ENCODE measurements at regions of chr3 and their contacts with region 1.

Region 1: GRCh38 chr3:101685870-101686412 is 577 bp downstream of the RPL24 start:
- DNase-seq: no peak
- ATAC-seq: peak; percentile 9 to 10
- H3K4me3 ChIP-seq: peak overlapping the region; percentile 74 to 93 (median 85)
- H3K27ac ChIP-seq: peak overlapping the region; percentile 93 to 97 (median 96)
- H3K4me1 ChIP-seq: peaks cover 26 to 36% of the 10 kb centered on the region in 2 donors
- H3K27me3 ChIP-seq: no peaks in the 10 kb centered on the region
- CTCF ChIP-seq: no peak
- POLR2A ChIP-seq: no peak

Region 2: GRCh38 chr3:100708967-100709841 is 976.7 kb before region 1 on chr3 and contains the start of gene TFG:
- in situ Hi-C with region 1: no loop called
- intact Hi-C with region 1: loop called (anchors 5 kb)
- DNase-seq: peak; percentile 95 to 98
- ATAC-seq: peak; percentile 95 to 98
- H3K4me3 ChIP-seq: peak within 1 kb of the TSS; percentile 73 to 97 (median 86)
- H3K27ac ChIP-seq: peak within 1 kb of the TSS; percentile 92 to 99 (median 96)
- H3K4me1 ChIP-seq: peaks cover 18 to 24% of the 10 kb centered on the region in 2 donors
- H3K27me3 ChIP-seq: no peaks in the 10 kb centered on the region
- CTCF ChIP-seq: no peak
- POLR2A ChIP-seq: peak; percentile 81 to 84
- total RNA-seq, gene TFG: 57.2 to 77.9 (median 67.3) TPM

Region 3: DNA sequence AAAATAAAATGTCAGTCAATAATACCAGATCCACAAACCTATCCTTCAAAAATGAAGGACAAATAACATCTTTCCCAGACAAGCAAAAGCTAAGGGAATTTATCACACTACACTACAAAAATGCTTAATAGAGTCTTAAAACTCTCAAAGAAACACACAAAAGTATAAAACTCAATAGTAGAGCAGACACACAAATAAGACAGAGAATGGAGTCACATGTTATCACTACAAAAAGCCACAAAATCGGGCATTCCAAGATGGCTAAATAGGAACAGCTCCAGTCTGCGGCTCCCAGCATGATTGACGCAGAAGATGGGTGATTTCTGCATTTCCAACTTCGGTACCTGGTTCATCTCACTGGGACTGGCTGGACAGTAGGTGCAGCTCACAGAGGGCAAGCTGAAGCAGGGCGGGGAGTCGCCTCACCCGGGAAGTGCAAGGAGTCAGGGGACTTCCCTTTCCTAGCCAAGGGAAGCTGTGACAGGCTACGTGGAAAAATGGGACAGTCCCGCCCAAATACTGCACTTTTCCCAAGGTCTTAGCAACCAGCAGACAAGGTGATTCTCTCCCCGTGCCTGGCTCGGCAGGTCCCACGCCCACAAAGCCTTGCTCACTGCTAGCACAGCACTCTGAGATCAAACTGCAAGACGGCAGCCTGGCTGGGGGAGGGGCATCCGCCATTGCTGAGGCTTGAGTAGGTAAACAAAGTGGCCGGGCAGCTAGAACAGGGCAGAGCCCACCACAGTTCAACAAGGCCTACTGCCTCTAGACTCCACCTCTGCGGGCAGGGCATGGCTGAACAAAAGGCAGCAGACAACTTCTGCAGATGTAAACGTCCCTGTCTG is 219.3 kb before region 1 on chr3:
- in situ Hi-C with region 1: no loop called
- intact Hi-C with region 1: no loop called
- DNase-seq: no peak
- ATAC-seq: no peak
- H3K4me3 ChIP-seq: no peak overlapping the region
- H3K27ac ChIP-seq: no peak overlapping the region
- H3K4me1 ChIP-seq: peaks cover 0 to 8% of the 10 kb centered on the region in 2 donors
- H3K27me3 ChIP-seq: no peaks in the 10 kb centered on the region
- CTCF ChIP-seq: no peak
- POLR2A ChIP-seq: no peak

Region 4: DNA sequence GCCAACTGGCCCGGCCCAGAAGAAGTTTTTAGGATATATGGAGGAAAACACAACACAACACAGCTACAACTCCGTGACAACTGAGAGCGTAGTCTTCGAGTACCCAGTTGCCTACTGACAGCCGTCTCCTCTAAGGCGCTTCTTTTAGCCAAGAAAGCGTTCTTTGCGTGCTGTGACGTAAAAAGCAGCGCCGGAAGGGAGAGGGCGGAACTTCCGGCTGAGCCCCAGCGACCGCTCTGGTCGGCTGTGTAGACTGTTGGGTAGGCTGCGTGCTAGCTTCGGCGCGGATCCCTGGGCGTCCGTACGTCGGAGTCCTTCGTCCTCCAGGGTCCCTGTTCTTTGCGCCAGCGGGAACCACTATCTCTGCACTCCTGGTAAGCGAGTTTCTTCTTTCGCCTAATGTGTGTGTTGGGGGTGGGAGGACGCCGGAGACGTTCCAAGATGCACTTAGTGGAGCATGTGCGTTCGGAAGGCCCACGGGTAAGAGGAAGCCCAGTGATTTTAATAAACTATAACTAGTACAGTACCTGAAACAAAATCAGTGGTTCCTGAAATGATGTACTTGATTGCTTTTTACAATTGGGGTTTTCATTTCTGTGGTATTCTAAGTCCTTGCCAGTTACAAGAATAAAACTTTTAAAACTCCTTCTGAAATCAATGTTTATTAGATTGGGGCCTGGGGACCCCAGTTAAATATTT is 124.2 kb before region 1 on chr3 and contains the start of gene TRMT10C:
- in situ Hi-C with region 1: loop called in 1 of 4 experiments (anchors 10 kb)
- intact Hi-C with region 1: no loop called
- DNase-seq: peak; percentile 82 to 90
- ATAC-seq: peak; percentile 99 to 100
- H3K4me3 ChIP-seq: peak within 1 kb of the TSS; percentile 85 to 99 (median 94)
- H3K27ac ChIP-seq: peak within 1 kb of the TSS; percentile 87 to 93 (median 92)
- H3K4me1 ChIP-seq: peaks cover 13 to 16% of the 10 kb centered on the region in 2 donors
- H3K27me3 ChIP-seq: peaks cover 0 to 21% (median 11%) of the 10 kb centered on the region in 3 donors
- CTCF ChIP-seq: no peak
- POLR2A ChIP-seq: peak; percentile 73 to 83
- total RNA-seq, gene TRMT10C: 17.9 to 33.2 (median 26.2) TPM

Region 5: GRCh38 chr3:101724329-101725193 is 38.6 kb after region 1 on chr3 and contains the start of gene CEP97:
- in situ Hi-C with region 1: no loop called
- intact Hi-C with region 1: loop called (anchors 2 kb)
- DNase-seq: peak; percentile 86 to 90
- ATAC-seq: peak; percentile 98 to 99
- H3K4me3 ChIP-seq: peak within 1 kb of the TSS; percentile 76 to 87 (median 85)
- H3K27ac ChIP-seq: peak within 1 kb of the TSS; percentile 74 to 81 (median 76)
- H3K4me1 ChIP-seq: peaks cover 10 to 32% of the 10 kb centered on the region in 2 donors
- H3K27me3 ChIP-seq: no peaks in the 10 kb centered on the region
- CTCF ChIP-seq: no peak
- POLR2A ChIP-seq: peak; percentile 33
- total RNA-seq, gene CEP97: 8.3 to 20.0 (median 13.2) TPM

Region 6: DNA sequence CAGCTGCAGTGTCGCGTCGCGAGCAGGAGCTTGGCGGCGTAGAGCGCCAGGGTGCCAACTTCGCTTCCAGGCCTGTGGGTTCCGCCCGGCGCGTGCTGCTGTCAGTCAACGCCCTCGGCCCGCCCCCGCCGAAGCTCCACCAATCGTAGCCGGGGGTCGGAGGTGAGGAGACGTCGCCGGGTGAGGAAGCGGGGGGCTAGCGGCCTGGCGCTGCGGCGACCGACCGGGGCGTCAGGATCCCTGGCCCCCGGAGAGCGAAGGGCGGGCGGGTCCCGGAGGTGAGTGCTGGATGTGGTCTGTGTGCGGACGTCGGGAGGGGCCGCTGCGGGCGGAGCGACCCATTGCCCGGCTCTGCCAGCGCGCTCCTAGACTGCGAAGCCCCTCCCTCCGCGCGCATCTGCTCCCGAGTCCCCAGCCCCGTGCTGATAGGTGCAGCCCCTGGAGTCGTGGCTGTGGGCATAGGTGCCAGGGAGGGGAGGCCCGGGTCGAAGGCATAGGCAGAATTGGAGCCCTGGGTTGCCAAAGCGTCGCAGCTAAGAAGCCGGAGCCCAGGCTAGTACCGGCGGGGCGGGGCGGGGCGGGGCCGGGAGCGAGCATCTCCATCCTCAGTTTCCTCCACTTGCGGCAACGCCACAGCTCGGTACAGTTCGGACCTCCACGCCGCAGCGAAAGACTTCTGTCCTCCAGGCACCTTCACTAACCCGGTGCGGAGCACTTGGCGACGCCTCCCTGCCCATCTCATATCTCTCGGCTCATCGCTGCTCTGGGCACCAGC is 93.3 kb after region 1 on chr3 and contains the start of gene NXPE3:
- in situ Hi-C with region 1: loop called in 1 of 4 experiments (anchors 10 kb)
- intact Hi-C with region 1: loop called (anchors 5 kb)
- DNase-seq: peak; percentile 93 to 94
- ATAC-seq: peak; percentile 76 to 87
- H3K4me3 ChIP-seq: peak within 1 kb of the TSS; percentile 74 to 84 (median 77)
- H3K27ac ChIP-seq: peak within 1 kb of the TSS; percentile 89 to 94 (median 90)
- H3K4me1 ChIP-seq: peaks cover 38 to 49% of the 10 kb centered on the region in 2 donors
- H3K27me3 ChIP-seq: no peaks in the 10 kb centered on the region
- CTCF ChIP-seq: no peak
- POLR2A ChIP-seq: peak; percentile 77
- total RNA-seq, gene NXPE3: 31.5 to 52.0 (median 44.5) TPM

Region 7: DNA sequence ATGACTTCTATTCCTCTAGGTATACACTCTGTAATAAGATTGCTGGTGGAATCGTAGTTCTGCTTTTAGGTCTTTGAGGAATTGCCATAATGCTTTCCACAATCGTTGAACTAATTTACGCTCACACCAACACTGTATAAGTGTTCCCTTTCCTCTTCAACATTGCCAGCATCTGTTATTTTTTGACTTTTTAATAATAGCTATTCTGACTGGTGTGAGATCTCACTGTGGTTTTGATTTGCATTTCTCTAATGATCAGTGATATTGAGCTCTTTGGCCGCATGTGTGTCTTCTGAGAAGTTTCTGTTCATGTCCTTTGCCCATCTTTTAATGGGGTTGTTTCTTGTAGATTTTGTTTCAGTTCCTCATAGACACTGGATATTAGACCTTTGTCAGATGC is 105.8 kb after region 1 on chr3:
- in situ Hi-C with region 1: no loop called
- intact Hi-C with region 1: no loop called
- DNase-seq: no peak
- ATAC-seq: no peak
- H3K4me3 ChIP-seq: no peak overlapping the region
- H3K27ac ChIP-seq: no peak overlapping the region
- H3K4me1 ChIP-seq: peaks cover 0 to 18% of the 10 kb centered on the region in 2 donors
- H3K27me3 ChIP-seq: no peaks in the 10 kb centered on the region
- CTCF ChIP-seq: no peak
- POLR2A ChIP-seq: no peak

Region 8: DNA sequence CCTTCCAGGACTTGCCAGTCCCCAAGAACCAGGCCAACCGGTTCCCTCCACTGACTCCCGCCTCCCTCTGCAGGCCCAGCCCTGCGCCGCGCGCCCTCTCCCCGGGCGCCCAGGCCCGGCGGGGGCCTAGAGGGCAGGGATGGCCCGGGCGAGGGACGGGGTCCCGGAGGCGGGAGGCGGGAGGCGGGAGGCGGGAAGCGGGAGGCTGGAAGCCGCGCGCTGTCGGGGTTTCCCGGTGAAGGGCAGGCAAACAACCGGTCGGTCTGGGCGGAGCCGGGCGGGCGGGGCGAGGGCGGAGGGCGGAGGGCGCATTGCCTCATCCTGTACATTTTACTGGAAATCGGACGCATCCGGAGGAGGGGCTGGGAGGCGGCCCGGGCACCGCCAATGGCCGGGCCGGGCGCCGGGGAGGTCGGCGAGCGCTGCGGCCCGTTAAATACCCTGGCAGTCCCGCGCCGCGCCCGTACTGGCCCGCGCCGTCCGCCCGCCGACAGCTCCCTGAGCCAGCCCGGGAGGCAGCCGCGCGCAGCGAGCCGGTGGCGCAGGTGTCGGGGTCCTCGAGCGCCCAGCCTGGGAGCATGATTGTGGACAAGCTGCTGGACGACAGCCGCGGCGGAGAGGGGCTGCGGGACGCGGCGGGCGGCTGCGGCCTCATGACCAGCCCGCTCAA is 163.2 kb after region 1 on chr3 and contains the start of gene NFKBIZ:
- in situ Hi-C with region 1: no loop called
- intact Hi-C with region 1: loop called (anchors 2 kb)
- DNase-seq: peak; percentile 93 to 95
- ATAC-seq: peak; percentile 93 to 94
- H3K4me3 ChIP-seq: peak within 1 kb of the TSS; percentile 73 to 89 (median 85)
- H3K27ac ChIP-seq: peak within 1 kb of the TSS; percentile 83 to 96 (median 94)
- H3K4me1 ChIP-seq: peaks cover 6% of the 10 kb centered on the region in 2 donors
- H3K27me3 ChIP-seq: no peaks in the 10 kb centered on the region
- CTCF ChIP-seq: peak in 1 of 5 experiments; percentile 18
- POLR2A ChIP-seq: peak; percentile 96 to 99
- total RNA-seq, gene NFKBIZ: 9.2 to 25.9 (median 20.6) TPM

Measured in gastrocnemius medialis (tissue), 4 donors.